Ovary (tissue), 10 donors: ENCODE measurements at regions of chr11 and their contacts with region 1.

Region 1: GRCh38 chr11:128290106-128290840 is 297.1 kb downstream of the ETS1 start:
- DNase-seq: peak; percentile 41 to 63 (median 48)
- H3K4me3 ChIP-seq: no peak overlapping the region
- H3K27ac ChIP-seq: no peak overlapping the region
- H3K4me1 ChIP-seq: peaks cover 3% of the 10 kb centered on the region
- H3K27me3 ChIP-seq: no peaks in the 10 kb centered on the region
- CTCF ChIP-seq: peak; percentile 45 to 82 (median 65)
- EP300 ChIP-seq: no peak
- POLR2A ChIP-seq: no peak

Region 2: DNA sequence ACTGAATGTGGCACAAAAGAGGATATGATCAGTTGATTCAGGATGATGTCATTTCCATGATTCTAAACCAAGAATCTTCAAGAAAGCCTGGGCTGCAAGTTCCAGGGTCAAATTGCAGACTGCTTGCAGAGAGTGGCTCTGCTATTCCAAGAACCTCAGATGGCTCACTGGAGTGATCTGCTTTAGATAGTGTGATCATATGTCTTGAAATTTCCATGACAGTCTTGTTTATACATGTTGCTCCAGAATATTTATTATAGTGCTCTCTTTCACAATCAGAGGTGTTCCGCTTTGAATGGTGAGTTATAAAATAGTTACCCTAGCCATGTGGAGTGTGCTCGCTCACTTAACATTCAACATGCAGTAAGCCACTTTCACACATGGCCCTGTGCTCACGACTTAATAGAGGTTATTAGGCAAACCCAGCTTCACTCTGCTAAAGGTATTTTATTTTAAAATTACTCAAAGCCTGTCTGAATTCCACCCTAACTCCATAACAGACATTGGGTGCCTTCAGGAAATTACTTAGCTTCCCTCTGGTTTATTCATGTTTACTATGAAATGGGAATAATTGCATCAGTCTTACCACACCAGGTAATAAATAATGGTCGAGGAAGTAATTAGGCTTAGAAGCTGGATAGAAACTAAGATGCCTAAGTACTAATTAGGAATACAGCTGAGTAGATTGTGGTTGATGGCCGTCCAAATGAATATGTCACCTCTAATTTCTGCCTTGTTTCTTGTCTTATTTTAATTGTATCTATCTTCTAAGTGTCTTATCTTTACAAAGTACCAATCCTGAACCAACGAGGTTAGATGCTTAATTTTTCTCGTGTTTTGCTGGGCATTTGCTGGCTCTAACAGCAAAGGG is 109.2 kb after region 1 on chr11:
- intact Hi-C with region 1: loop called in 1 of 4 experiments (anchors 10 kb)
- DNase-seq: no peak
- H3K4me3 ChIP-seq: no peak overlapping the region
- H3K27ac ChIP-seq: no peak overlapping the region
- H3K4me1 ChIP-seq: peaks cover 2% of the 10 kb centered on the region
- H3K27me3 ChIP-seq: no peaks in the 10 kb centered on the region
- CTCF ChIP-seq: no peak
- EP300 ChIP-seq: no peak
- POLR2A ChIP-seq: no peak

Region 3: GRCh38 chr11:128568166-128568778 is 278.0 kb after region 1 on chr11:
- intact Hi-C with region 1: loop called in 1 of 4 experiments (anchors 10 kb)
- DNase-seq: no peak
- H3K4me3 ChIP-seq: no peak overlapping the region
- H3K27ac ChIP-seq: no peak overlapping the region
- H3K4me1 ChIP-seq: no peaks in the 10 kb centered on the region
- H3K27me3 ChIP-seq: no peaks in the 10 kb centered on the region
- CTCF ChIP-seq: no peak
- EP300 ChIP-seq: no peak
- POLR2A ChIP-seq: no peak

Region 4: GRCh38 chr11:128630367-128631230 is 340.3 kb after region 1 on chr11:
- intact Hi-C with region 1: loop called (anchors 2 to 5 kb)
- DNase-seq: peak; percentile 85 to 94 (median 91)
- H3K4me3 ChIP-seq: no peak overlapping the region
- H3K27ac ChIP-seq: peak overlapping the region in 1 of 2 donors; percentile 24
- H3K4me1 ChIP-seq: no peaks in the 10 kb centered on the region
- H3K27me3 ChIP-seq: no peaks in the 10 kb centered on the region
- CTCF ChIP-seq: peak; percentile 65 to 91 (median 82)
- EP300 ChIP-seq: no peak
- POLR2A ChIP-seq: no peak